Prostate gland (tissue), 2 donors: ENCODE measurements at regions of chr6 and their contacts with region 1.

Region 1: GRCh38 chr6:32153564-32154513 is at the start of gene PPT2:
- DNase-seq: peak; percentile 80
- H3K4me3 ChIP-seq: peak within 1 kb of the TSS; percentile 53 to 61
- H3K27ac ChIP-seq: peak within 1 kb of the TSS; percentile 88 to 89
- H3K4me1 ChIP-seq: peaks cover 14% of the 10 kb centered on the region
- H3K27me3 ChIP-seq: no peaks in the 10 kb centered on the region
- CTCF ChIP-seq: peak in 3 of 4 experiments; percentile 10 to 38 (median 28)
- POLR2A ChIP-seq: peak; percentile 39
- total RNA-seq, gene PPT2: 18.6 to 32.9 TPM

Region 2: GRCh38 chr6:31969712-31970603 is 183.9 kb before region 1 on chr6:
- intact Hi-C with region 1: loop called (anchors 10 kb)
- DNase-seq: no peak
- H3K4me3 ChIP-seq: no peak overlapping the region
- H3K27ac ChIP-seq: peak overlapping the region in 1 of 2 donors; percentile 99
- H3K4me1 ChIP-seq: peaks cover 10% of the 10 kb centered on the region
- H3K27me3 ChIP-seq: no peaks in the 10 kb centered on the region
- CTCF ChIP-seq: no peak
- POLR2A ChIP-seq: no peak

Region 3: GRCh38 chr6:32118782-32119628 is 34.8 kb before region 1 on chr6:
- intact Hi-C with region 1: loop called (anchors 1 kb)
- DNase-seq: peak; percentile 84
- H3K4me3 ChIP-seq: no peak overlapping the region
- H3K27ac ChIP-seq: peak overlapping the region; percentile 47 to 52
- H3K4me1 ChIP-seq: no peaks in the 10 kb centered on the region
- H3K27me3 ChIP-seq: no peaks in the 10 kb centered on the region
- CTCF ChIP-seq: peak; percentile 63 to 96 (median 92)
- POLR2A ChIP-seq: no peak

Region 4: DNA sequence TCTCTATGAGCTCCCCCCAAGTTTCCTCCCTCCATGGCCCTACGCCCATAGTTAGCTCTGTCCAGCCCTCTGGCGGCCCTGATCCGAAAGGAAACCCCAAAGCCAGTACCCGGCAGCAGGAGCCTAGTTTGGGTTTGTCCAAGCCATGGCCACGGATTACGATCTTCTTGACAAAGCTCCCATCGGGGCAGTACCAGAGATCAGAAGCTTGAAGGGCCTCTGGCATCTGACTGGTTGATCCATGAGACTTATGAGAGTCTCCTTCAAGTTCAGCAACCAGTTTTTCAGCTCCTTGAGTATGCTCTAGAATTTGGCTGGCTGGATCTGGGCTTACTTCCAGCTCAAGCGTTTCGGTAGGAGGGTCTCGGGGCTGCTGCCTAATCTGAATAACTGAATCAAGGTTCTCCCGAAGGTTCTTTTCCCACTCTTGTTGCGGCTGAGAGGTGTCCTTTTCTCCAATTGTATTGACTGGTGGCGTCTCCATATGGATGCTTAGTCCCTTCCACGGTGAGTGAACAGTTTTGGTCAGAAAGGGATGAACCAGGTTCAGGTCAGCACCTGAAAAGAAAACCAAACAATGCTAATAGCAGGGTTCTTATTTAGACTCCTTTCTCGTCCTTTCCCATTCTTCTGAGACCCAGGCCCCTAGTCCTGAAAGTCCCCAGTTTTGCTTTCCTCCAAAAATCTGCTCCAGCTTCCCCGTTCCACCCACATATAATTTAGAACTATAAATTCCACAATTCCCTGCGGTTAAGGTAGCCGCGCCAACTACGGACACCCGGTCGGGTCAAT is 24.3 kb before region 1 on chr6:
- intact Hi-C with region 1: loop called (anchors 2 kb)
- DNase-seq: no peak
- H3K4me3 ChIP-seq: peak overlapping the region; percentile 58 to 67
- H3K27ac ChIP-seq: peak overlapping the region; percentile 94 to 95
- H3K4me1 ChIP-seq: peaks cover 22% of the 10 kb centered on the region
- H3K27me3 ChIP-seq: no peaks in the 10 kb centered on the region
- CTCF ChIP-seq: no peak
- POLR2A ChIP-seq: no peak